Dorsolateral prefrontal cortex (tissue), 120 donors: ENCODE measurements at regions of chr5 and their contacts with region 1.

Region 1: DNA sequence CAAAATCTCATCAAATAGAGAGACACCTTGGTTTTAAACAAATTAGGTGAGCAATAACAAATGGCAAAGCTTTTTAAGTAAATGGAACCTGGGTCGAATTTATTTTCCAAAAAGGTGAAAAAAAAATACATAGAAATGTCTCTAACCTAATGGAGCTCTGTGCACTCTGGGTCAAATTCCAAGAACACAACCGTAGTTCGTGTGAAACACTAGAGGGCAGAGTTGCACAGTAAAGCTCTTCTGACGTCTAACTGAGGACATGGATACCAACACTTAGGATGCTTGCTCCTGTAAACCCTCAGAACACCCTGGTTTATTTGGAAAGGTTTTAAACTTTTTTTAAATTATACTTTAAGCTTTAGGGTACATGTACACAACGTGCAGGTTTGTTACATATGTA is 18.9 kb downstream of the MARCHF11 start:
- DNase-seq: peak in 2 of 10 donors; percentile 18 to 30
- H3K4me3 ChIP-seq: no peak overlapping the region
- H3K27ac ChIP-seq: no peak overlapping the region
- H3K27me3 ChIP-seq: no peaks in the 10 kb centered on the region
- CTCF ChIP-seq: peak; percentile 30 to 79 (median 62)

Region 2: DNA sequence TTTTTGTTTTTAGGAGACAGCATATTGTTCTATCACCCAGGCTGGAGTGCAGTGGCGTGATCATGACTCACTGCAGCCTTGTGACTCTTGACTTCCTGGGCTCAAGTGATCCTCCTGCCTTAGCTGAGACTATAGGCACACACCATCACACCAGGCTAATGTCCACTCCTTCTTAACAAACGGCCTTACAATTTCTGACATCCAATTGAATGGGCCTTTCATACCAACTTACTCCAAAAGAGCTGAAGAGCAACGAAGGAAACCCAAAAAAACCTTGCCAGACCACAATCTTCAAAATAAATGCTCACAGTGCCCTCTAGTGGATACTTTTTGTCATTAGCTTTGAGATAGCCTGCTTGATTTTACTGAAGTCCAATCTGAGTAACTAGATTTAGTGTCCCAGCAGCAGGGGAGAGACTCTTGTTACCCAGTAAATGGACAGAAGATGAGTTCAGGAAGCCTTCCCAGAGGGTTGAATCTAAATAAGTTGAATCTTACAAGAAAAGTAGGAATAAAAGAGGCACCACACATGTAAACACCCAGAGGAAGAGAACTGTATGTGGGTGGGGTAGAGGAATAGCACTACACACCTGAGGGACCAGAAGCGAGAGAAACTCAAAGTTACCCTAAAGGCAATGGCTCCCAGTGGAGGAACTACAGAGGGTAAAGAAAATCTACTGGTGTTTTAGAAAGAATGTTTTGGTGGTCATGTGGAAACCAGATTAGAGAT is 295.6 kb after region 1 on chr5:
- intact Hi-C with region 1: loop called (anchors 2 to 10 kb)
- DNase-seq: peak in 3 of 10 donors; percentile 30 to 68 (median 59)
- H3K4me3 ChIP-seq: peak overlapping the region in 3 of 59 donors; percentile 3 to 23 (median 16)
- H3K27ac ChIP-seq: peak overlapping the region in 50 of 59 donors; percentile 0 to 80 (median 54)
- H3K27me3 ChIP-seq: no peaks in the 10 kb centered on the region
- CTCF ChIP-seq: peak; percentile 48 to 93 (median 75)

Region 3: DNA sequence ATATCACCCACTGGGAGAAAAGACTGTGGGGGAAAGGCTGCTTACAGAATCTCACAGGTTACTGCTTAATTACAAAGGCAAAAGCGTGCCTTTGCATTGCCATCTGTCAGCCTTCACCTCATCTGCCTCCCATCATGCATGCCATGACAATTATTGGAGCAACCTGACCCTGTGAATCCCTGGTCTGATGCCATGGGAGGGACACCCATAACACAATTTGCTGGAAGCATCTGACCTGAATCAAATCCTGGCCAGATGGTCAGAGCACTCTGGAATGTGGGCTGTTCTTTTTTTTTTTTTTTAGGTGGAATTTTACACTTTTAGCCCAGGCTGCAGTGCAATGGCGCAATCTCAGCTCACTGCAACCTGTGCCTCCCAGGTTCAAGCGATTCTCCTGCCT is 467.7 kb after region 1 on chr5:
- intact Hi-C with region 1: no loop called
- DNase-seq: peak in 1 of 10 donors; percentile 82
- H3K4me3 ChIP-seq: no peak overlapping the region
- H3K27ac ChIP-seq: no peak overlapping the region
- H3K27me3 ChIP-seq: no peaks in the 10 kb centered on the region
- CTCF ChIP-seq: no peak